Head of caudate nucleus (tissue), 42 donors: ENCODE measurements at regions of chr2 and their contacts with region 1.

Region 1: GRCh38 chr2:156435715-156436496 is at the start of gene GPD2:
- DNase-seq: peak; percentile 69 to 95 (median 89)

Region 2: GRCh38 chr2:156319811-156320485 is 116.0 kb before region 1 on chr2:
- intact Hi-C with region 1: no loop called
- DNase-seq: peak in 26 of 42 donors; percentile 27 to 76 (median 42)

Region 3: DNA sequence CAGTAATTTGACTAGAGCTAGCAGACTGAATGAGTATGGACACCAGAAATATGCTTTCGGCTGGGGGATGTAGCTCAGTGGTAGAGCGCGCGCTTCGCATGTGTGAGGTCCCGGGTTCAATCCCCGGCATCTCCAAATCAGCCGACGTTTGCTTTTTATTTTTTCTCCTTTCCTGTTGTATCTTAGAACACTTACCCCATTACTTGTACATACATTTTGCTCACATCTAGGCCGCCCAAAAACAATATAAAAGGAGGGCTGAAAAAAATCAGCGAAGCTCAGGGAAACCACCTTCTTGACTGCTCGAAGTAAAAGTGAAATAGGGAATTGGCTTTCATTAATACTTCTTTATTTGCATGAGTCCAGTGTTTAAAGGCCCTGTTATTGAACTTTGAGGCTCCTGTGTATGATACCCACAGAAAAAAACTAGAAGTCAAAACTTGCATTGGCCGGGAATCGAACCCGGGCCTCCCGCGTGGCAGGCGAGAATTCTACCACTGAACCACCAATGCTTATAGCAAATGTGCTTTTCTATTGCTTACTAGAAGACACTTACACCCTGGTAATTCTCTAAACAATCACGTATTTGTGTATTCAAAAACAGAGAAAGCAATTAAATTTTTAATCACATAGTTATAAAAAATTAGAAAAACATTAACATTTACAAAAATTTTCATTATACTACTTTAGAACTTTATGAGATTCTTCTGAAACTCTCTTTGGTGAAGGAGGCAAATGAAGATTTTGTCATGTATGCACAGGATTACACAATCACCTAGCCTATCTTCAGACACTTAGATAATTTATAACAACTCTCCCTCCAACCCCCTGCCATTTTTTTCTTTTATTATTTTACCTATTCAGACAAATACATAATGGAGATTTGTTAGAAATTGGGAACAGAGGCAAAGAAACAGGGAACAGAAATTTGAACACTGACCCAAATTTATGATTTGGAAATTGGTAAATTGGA is 34.9 kb before region 1 on chr2:
- intact Hi-C with region 1: loop called (anchors 2 kb)
- DNase-seq: peak; percentile 56 to 94 (median 80)